PC-3 (cell line): ENCODE measurements at regions of chr14 and their contacts with region 1.

Region 1: GRCh38 chr14:80587075-80587724 is 354.3 kb downstream of the CEP128 start:
- DNase-seq: peak; percentile 66
- ATAC-seq: peak; percentile 35; the same call in 1 of the 2 replicates
- H3K4me3 ChIP-seq: no peak overlapping the region
- H3K27ac ChIP-seq: peak overlapping the region; percentile 9; the same call in 1 of the 2 replicates
- H3K4me1 ChIP-seq: peaks cover 36% of the 10 kb centered on the region
- H3K27me3 ChIP-seq: no peaks in the 10 kb centered on the region
- CTCF ChIP-seq: peak; percentile 83

Region 2: GRCh38 chr14:80213599-80213998 is 373.6 kb before region 1 on chr14:
- CTCF ChIA-PET with region 1: no interaction called
- POLR2A ChIA-PET with region 1: no interaction called
- intact Hi-C with region 1: loop called (anchors 1 kb)
- DNase-seq: peak; percentile 81
- ATAC-seq: peak; percentile 33; the same call in 1 of the 2 replicates
- H3K4me3 ChIP-seq: no peak overlapping the region
- H3K27ac ChIP-seq: peak overlapping the region; percentile 28
- H3K4me1 ChIP-seq: peaks cover 31% of the 10 kb centered on the region
- H3K27me3 ChIP-seq: no peaks in the 10 kb centered on the region
- CTCF ChIP-seq: peak; percentile 88

Region 3: GRCh38 chr14:80523518-80524142 is 63.6 kb before region 1 on chr14:
- CTCF ChIA-PET with region 1: interaction called, 3 read pairs
- POLR2A ChIA-PET with region 1: no interaction called
- intact Hi-C with region 1: loop called (anchors 1 kb)
- DNase-seq: peak; percentile 87
- ATAC-seq: peak; percentile 86
- H3K4me3 ChIP-seq: peak overlapping the region; percentile 20; the same call in 1 of the 2 replicates
- H3K27ac ChIP-seq: peak overlapping the region; percentile 76
- H3K4me1 ChIP-seq: peaks cover 29% of the 10 kb centered on the region
- H3K27me3 ChIP-seq: no peaks in the 10 kb centered on the region
- CTCF ChIP-seq: no peak

Region 4: DNA sequence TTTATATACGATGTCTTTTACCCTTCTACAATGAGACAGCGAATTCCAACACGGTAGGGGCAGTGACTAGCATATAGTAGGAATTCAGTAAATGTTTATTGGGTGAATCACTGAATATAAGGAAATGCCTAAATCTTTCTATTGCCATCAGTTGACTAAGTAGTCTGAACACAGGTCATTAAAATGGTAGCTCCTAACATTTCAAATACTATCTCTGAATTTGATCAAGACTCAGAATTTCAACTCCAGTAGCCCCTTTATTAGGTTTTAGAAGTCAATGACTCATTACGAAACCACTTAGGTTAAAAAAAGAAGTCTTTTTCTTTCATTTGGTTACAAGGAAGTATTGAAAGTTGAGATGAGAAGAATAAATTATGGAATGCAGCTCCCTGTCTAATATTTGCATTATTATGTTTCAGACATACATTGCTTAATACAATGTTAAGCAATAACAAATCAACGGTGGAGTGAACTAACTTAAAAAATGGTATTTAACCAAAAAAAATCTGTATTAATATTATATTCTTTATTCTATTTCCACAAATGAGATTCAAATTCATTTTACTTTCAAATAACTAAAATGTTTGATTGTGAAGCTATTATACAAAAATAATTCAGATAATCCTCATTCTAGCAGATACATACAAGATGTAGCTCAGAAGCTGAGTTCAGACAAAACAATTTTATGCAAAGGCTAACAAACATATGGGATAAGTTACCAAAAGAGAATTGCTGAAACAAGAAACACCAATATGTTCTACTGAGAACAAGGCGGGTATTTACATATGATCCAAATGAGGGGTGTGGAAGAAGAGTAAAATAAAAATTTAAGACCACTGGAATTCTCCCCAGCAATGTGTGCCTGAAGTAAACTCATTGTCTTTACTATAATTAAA is 51.7 kb after region 1 on chr14:
- CTCF ChIA-PET with region 1: no interaction called
- POLR2A ChIA-PET with region 1: no interaction called
- intact Hi-C with region 1: loop called (anchors 2 kb)
- DNase-seq: peak; percentile 96
- ATAC-seq: peak; percentile 98
- H3K4me3 ChIP-seq: 0 out of 2 replicates have a peak overlapping the region, but pooled peaks have one; percentile 2
- H3K27ac ChIP-seq: peak overlapping the region; percentile 87
- H3K4me1 ChIP-seq: peaks cover 46% of the 10 kb centered on the region
- H3K27me3 ChIP-seq: no peaks in the 10 kb centered on the region
- CTCF ChIP-seq: no peak

Region 5: DNA sequence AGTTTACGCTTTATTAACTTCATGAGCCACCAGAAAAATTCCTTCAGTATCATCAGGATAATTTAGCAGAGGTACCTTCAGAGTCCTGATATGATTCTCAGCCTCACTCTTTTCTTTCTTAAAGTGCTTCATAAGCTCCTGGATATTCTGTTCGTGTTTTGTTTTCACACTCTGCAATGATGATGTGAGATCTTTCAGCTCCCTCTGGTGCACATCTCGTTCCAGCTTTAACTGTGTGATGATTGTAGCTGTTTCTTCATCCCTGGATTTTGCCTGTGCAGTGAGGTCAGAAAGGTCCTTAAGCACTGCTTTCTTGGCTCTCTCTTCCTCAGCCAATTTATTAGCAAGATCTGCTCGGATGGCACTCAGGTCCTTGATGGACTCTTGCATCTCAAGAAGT is 197.6 kb after region 1 on chr14:
- CTCF ChIA-PET with region 1: interaction called, 5 read pairs
- POLR2A ChIA-PET with region 1: no interaction called
- intact Hi-C with region 1: loop called (anchors 5 kb)
- DNase-seq: no peak
- ATAC-seq: 0 out of 2 replicates have a peak, but pooled peaks have one; percentile 15
- H3K4me3 ChIP-seq: no peak overlapping the region
- H3K27ac ChIP-seq: no peak overlapping the region
- H3K4me1 ChIP-seq: no peaks in the 10 kb centered on the region
- H3K27me3 ChIP-seq: no peaks in the 10 kb centered on the region
- CTCF ChIP-seq: no peak